Activated CD4-positive, alpha-beta memory T cell treated with anti-CD3 and anti-CD28 coated beads, Interleukin-2, amount 10 ng/mL, durations not matched to agents 7 days and 5 days (primary cell): ENCODE measurements at regions of chr6 and their contacts with region 1.

Region 1: DNA sequence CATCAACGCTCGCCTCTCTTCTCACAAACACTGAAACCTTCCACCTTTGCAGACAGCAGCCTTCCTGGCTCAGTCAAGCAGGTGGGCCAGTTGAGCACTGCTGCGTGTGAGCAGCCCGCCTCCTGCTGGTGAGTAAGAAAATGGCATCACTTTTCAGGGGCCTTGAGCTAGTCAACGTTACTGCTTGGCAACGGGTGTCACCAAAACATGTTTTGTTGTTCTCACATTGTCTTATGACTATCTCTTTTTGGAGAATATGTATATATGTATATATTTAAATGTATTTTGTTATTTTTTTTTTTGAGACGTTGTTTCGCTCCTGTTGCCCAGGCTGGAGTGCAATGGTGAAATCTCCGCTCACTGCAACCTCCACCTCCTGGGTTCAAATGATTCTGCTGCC is 97.0 kb upstream of the AGPAT4 start:
- DNase-seq: peak; percentile 73
- H3K4me3 Mint-ChIP-seq: no peak overlapping the region
- H3K27ac Mint-ChIP-seq: no peak overlapping the region
- H3K4me1 Mint-ChIP-seq: no peaks in the 10 kb centered on the region
- H3K27me3 Mint-ChIP-seq: no peaks in the 10 kb centered on the region

Region 2: DNA sequence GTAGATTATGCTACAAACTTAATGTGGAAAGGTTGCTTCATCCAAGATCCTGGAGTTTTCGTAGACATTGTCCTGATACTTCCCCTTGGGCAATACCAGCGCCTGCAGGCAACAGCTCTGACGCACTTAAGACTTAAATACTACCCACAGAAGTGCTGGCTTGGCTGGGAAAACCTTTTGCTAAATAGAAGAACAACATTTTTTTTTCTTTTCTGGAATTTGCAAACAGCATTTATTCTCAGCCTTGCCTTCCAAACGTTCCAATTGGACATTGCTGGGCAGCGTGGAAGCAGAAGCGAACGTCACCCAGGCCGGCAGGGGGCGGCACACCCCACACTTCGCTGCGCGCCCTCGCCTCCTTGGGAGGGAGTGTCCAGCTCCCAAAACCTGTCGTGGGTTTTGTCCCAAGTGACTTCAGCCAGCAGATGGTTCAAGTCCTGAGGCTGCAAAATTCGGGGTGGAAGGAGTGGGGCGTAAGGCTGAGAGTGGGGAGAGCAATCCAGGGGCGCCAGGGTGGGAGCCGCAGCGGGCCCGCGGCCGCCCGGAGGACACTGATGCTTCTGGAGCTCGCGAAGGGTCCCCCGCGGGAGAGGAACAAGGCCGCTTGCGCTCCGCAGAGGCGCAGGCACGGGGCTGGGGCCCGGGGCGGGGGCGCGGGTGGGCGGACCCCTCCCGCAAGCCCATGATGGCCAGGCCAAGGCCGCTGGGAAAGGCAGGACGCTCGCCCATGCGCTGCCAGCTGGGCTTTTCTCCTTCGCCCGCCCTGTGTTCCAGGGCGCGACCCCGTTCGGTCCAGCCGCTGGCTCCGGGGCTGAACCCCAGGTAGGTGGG is 440.1 kb before region 1 on chr6:
- CTCF ChIA-PET with region 1: interaction called, 363 read pairs
- POLR2A ChIA-PET with region 1: interaction called, 6 read pairs
- DNase-seq: peak; percentile 58
- H3K4me3 Mint-ChIP-seq: no peak overlapping the region
- H3K27ac Mint-ChIP-seq: no peak overlapping the region
- H3K4me1 Mint-ChIP-seq: peaks cover 8% of the 10 kb centered on the region
- H3K27me3 Mint-ChIP-seq: peaks cover 25% of the 10 kb centered on the region

Region 3: DNA sequence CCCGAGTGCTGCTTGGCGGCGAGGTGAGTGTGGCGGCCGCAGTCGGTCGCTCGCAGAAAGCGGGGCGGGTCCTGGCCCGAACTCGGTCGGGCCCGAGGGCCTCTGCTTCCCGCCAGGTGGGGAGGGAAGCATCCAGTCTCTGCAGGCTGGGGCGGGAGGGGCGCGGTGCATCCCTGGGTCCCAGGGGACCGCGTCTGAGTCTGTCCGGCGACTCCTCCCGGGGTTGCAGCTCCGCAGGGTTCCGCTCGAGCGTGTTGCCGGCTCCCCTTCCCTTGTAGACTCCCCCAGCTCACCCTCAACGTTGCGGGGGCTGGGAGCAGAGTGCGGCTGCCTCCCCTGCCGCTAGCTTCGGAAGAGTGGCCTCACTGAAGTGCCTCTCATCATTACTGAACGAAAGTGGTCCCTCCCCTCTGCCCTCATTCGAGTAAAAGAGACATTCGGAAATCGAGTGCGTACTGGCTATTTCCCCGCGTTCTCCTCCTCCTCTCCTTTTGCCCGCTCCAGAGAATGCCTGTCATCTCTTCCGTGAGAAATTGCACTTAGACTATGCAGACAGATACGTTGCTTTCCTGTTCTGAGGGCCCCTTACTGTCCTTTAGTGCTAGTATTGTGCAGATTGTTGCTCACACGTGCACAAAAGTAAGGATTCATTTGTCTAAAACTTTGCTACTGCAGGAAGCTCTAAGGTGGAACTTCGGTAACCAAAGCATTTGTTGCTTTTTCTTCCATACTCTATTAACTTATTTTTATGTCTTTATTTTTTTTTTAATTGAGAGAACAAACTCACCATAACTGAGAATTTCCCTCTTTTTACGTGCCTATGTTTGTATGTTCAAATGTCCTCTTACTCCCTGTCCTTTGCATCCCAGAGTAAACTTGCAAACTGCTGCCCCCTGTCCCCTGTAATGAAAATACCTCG is 378.6 kb before region 1 on chr6:
- CTCF ChIA-PET with region 1: interaction called, 42 read pairs
- POLR2A ChIA-PET with region 1: no interaction called
- DNase-seq: peak; percentile 34
- H3K4me3 Mint-ChIP-seq: peak overlapping the region; percentile 90
- H3K27ac Mint-ChIP-seq: peak overlapping the region; percentile 83
- H3K4me1 Mint-ChIP-seq: peaks cover 28% of the 10 kb centered on the region
- H3K27me3 Mint-ChIP-seq: peaks cover 9% of the 10 kb centered on the region

Region 4: DNA sequence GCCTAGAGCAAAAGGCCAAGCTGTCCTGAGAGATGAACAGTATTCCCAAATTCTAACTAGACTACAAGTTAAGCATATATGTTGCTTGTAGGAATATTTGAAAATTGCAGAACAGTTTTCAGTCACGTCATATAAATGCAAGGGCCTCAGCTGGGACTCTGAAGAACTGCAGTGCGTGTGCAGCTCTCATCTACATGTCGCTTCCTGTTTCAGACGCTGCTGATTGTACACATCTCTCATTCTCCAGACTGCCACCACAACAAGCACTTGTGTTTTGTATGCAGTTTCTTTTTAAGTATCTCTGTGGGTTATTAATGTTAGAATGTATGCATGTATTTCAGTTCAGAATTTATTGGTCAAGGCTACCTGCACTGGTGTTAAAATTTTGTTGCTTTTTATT is 259.6 kb before region 1 on chr6:
- CTCF ChIA-PET with region 1: interaction called, 10 read pairs
- POLR2A ChIA-PET with region 1: no interaction called
- DNase-seq: peak; percentile 35
- H3K4me3 Mint-ChIP-seq: no peak overlapping the region
- H3K27ac Mint-ChIP-seq: peak overlapping the region; percentile 68
- H3K4me1 Mint-ChIP-seq: peaks cover 30% of the 10 kb centered on the region
- H3K27me3 Mint-ChIP-seq: no peaks in the 10 kb centered on the region

Region 5: DNA sequence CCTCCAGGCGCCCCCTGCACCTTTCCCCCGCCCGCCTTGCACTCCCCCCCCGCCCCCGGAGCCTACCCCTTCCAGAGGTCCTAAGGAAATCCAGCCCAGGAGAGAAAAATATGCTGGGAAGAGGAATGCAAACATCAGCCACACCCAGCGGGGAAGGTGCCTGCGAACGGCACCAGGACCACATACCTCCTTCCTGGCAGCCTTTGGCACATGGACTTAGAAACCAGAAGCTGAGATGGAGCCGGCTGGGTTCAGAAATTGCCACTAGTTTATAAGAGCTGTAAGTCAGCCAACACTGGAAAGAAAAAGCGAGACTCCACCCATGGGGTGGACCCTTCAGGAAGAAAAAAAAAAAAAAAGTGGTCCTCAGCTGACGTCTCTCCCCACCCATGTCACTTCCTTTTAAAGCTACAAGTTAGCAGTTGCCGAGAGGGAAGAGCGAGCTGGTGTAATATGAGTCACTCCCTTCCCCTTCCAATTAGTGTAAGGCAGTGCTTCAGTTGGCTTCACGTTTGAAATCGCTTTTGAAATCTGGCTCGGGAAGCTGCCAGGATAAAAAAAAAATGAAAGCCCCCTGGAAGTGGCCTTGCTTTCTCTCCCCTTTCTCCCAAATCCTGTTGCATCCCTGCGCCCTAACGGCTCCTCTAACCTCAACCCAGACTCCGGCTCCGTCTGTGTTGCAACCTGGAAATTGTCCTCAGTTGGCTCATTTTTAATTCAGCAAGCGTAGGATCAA is 97.0 kb before region 1 on chr6 and contains the start of gene AGPAT4:
- CTCF ChIA-PET with region 1: interaction called, 12 read pairs
- POLR2A ChIA-PET with region 1: no interaction called
- DNase-seq: peak; percentile 74
- H3K4me3 Mint-ChIP-seq: peak within 1 kb of the TSS; percentile 73
- H3K27ac Mint-ChIP-seq: peak within 1 kb of the TSS; percentile 78
- H3K4me1 Mint-ChIP-seq: peaks cover 33% of the 10 kb centered on the region
- H3K27me3 Mint-ChIP-seq: peaks cover 11% of the 10 kb centered on the region
- total RNA-seq, gene AGPAT4: 13.9 to 14.3 TPM